ENCODE measurements at regions of chr17 and their contacts with region 1.

Region 1: GRCh38 chr17:43211480-43212402 is at the start of gene TMEM106A:
- DNase-seq: peak; percentile 34 to 85
- H3K4me3 ChIP-seq: peak within 1 kb of the TSS; percentile 59 to 82 (median 76)
- H3K27ac ChIP-seq: peak within 1 kb of the TSS; percentile 64; the same call in 1 of the 2 replicates
- H3K4me1 ChIP-seq: peaks cover 0 to 5% (median 3%) of the 10 kb centered on the region in 4 experiments; a peak in 4 of 7 replicates
- H3K27me3 ChIP-seq: peaks cover 0 to 2% (median 0%) of the 10 kb centered on the region in 4 experiments; a peak in 1 of 7 replicates
- CTCF ChIP-seq: peak; percentile 26 to 49 (median 41); a peak in 3 of 4 replicates
- EP300 ChIP-seq: no peak
- POLR2A ChIP-seq: peak in 1 of 2 experiments; percentile 66; a peak in 2 of 3 replicates
- RAD21 ChIP-seq: peak in 1 of 2 experiments; percentile 7; a peak in 1 of 4 replicates
- total RNA-seq, gene TMEM106A: 4.1 and 5.4 TPM in 2 replicates

Region 2: DNA sequence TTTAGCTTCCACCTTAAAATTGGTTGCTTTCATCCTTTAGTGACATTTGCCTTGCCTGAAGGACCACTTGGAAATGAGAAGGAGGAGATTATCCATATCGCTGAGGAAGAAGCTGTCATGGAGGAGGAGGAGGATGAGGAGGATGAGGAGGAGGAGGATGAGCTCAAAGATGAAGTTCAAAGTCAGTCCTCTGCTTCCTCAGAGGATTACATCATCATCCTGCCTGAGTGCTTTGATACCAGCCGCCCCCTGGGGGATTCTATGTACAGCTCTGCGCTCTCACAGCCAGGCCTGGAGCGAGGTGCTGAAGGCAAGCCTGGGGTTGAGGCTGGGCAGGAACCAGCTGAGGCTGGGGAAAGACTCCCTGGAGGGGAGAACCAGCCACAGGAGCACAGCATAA is 11.6 kb before region 1 on chr17:
- CTCF ChIA-PET with region 1: interaction called, 14 read pairs
- POLR2A ChIA-PET with region 1: interaction called, 8 read pairs
- DNase-seq: no peak
- H3K4me3 ChIP-seq: no peak overlapping the region
- H3K27ac ChIP-seq: no peak overlapping the region
- H3K4me1 ChIP-seq: no peaks in the 10 kb centered on the region
- H3K27me3 ChIP-seq: no peaks in the 10 kb centered on the region
- CTCF ChIP-seq: no peak
- EP300 ChIP-seq: no peak
- POLR2A ChIP-seq: no peak
- RAD21 ChIP-seq: no peak